ENCODE measurements at regions of chr10 and their contacts with region 1.

Region 1: GRCh38 chr10:52951824-52952223 is 179.2 kb upstream of the MBL2 start:
- DNase-seq: peak; percentile 69
- H3K4me3 ChIP-seq: no peak overlapping the region
- H3K27ac ChIP-seq: no peak overlapping the region
- H3K4me1 ChIP-seq: no peaks in the 10 kb centered on the region
- CTCF ChIP-seq: peak; percentile 80

Region 2: GRCh38 chr10:52746169-52746568 is 205.7 kb before region 1 on chr10:
- CTCF ChIA-PET with region 1: no interaction called
- POLR2A ChIA-PET with region 1: no interaction called
- intact Hi-C with region 1: no loop called
- DNase-seq: no peak
- H3K4me3 ChIP-seq: no peak overlapping the region
- H3K27ac ChIP-seq: no peak overlapping the region
- H3K4me1 ChIP-seq: no peaks in the 10 kb centered on the region
- CTCF ChIP-seq: peak; percentile 37; the same call in 1 of the 2 replicates

Region 3: DNA sequence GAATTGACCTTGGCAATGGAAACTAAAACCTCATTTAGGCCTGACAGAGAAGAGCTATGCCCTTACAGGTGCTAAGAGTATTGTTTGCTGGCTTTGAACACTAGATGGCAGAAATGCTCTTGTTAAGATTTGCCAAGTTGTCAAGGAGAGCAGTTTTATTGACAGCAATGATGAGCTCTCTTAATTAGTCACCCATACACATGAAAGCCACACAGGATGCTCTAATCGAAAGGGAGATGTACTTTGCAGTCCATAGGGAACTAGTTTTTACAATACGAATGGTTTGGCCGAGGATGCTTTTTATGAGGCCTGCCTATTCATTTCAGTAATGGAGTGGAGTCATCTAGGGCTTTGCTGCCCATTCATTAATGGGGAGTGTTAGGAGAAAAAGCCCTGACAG is 133.8 kb before region 1 on chr10:
- CTCF ChIA-PET with region 1: no interaction called
- POLR2A ChIA-PET with region 1: no interaction called
- intact Hi-C with region 1: loop called (anchors 10 kb)
- DNase-seq: peak; percentile 80
- H3K4me3 ChIP-seq: no peak overlapping the region
- H3K27ac ChIP-seq: no peak overlapping the region
- H3K4me1 ChIP-seq: peaks cover 35% of the 10 kb centered on the region
- CTCF ChIP-seq: peak; percentile 90

Measured in OCI-LY7 (cell line).